H1 (cell line): ENCODE measurements at regions of chr10 and their contacts with region 1.

Region 1: DNA sequence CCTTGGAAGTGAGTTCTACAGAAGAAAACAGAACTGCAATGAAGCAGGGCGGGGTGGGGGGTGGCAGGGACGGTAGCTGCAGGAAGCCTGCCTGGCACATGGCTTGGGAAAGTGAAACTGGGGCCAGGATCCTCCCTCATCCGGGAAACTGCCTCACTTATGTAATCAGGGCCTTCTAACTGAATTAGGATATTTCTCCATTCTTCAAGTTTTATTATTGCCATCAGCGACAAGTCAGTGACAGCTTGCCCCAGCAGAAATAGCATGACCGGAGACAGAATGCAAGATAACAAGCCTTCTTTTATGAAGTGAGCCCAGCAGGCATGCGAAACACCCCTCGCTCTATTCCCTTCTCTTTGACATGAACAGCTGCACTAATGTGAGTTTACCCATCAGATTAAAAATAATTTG is 77.5 kb upstream of the CACUL1 start:
- DNase-seq: no peak
- H3K4me3 ChIP-seq: no peak overlapping the region
- H3K27ac ChIP-seq: no peak overlapping the region
- H3K4me1 ChIP-seq: no peaks in the 10 kb centered on the region
- H3K27me3 ChIP-seq: no peaks in the 10 kb centered on the region
- CTCF ChIP-seq: no peak
- EP300 ChIP-seq: no peak
- POLR2A ChIP-seq: no peak
- RAD21 ChIP-seq: no peak

Region 2: DNA sequence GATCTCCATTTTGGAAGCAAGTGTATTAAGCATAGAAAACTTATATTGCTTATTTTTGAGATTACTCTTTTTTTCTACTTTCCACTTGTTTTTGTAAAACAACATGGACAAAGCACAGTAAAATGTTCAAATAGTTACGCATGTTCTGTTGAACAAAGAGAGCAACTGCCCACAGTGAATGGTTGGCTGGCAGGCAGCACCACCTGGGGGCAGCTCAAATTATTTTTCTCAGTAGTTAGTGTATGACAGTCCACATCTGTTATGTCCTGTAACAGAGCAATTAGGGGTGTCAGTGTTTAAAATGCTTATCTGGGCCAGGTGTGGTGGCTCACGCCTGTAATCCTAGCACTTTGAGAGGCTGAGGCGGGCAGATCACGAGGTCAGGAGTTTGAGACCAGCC is 31.3 kb before region 1 on chr10:
- CTCF ChIA-PET with region 1: interaction called, 19 read pairs
- POLR2A ChIA-PET with region 1: no interaction called
- DNase-seq: no peak
- H3K4me3 ChIP-seq: no peak overlapping the region
- H3K27ac ChIP-seq: no peak overlapping the region
- H3K4me1 ChIP-seq: no peaks in the 10 kb centered on the region
- H3K27me3 ChIP-seq: no peaks in the 10 kb centered on the region
- CTCF ChIP-seq: peak; percentile 20 to 34 (median 22); a peak in 3 of 4 replicates
- EP300 ChIP-seq: no peak
- POLR2A ChIP-seq: no peak
- RAD21 ChIP-seq: peak; percentile 50 to 63

Region 3: DNA sequence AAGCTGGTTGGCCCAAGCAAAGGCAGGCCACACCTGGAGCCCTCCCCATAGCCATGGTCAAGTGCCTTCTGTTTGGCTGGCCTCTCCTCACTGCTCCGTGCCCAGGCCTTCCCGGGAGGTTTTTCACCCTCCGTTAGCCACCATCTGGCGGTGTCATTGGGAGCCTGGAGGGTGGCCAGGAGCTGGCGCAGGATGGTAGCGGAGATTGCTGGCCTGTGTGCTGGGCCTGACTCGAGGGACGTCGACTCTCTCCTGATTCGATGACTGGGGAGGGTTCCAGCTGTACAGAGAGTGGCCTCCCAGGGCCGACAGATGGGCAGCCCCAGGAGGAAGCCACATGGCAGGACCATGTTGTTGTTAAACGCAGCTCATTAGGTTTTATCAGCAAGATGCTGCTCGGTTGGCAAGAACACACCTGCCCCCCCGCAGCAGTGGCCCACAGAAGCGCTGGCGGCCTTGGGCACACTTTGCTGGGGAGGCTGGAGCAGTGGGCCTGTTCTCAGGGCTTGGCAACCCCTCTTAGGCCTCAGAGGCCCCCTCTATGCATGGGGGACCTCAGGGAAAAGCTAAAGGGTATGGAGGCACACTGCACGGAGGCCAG is 13.5 kb before region 1 on chr10:
- CTCF ChIA-PET with region 1: interaction called, 21 read pairs
- POLR2A ChIA-PET with region 1: no interaction called
- DNase-seq: no peak
- H3K4me3 ChIP-seq: no peak overlapping the region
- H3K27ac ChIP-seq: no peak overlapping the region
- H3K4me1 ChIP-seq: no peaks in the 10 kb centered on the region
- H3K27me3 ChIP-seq: no peaks in the 10 kb centered on the region
- CTCF ChIP-seq: no peak
- EP300 ChIP-seq: no peak
- POLR2A ChIP-seq: no peak
- RAD21 ChIP-seq: no peak

Region 4: DNA sequence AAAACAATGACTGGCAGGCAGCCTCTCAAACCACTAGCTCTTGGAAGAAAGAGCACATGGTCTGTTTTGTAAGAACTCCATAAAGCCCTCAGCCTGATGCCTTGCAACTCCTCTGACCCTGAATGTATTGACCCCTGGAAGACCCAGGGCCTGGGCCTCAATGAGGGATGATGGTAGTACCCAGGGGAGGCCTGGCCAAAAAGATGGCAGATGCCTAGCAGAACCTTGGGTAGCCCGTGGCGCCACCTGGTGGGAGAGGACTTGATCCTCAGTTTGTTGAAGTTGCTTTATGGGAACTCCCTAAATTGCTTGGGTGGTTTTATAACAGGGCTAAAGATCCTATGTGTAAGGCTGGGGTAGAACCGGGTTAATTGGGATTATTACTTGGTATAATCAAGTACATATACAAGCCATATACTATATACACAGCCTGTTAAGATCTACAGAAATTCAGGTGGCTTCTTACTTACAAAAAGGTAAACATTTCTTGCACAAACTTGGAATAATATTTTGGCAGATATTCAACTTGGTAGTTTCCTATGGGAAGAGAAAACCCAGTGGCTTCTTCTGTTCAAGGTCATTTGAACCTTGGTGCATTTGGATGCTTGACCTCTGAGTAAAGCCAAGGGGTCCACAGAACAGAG is 18.3 kb after region 1 on chr10:
- CTCF ChIA-PET with region 1: interaction called, 10 read pairs
- POLR2A ChIA-PET with region 1: no interaction called
- DNase-seq: peak; percentile 46 to 92
- H3K4me3 ChIP-seq: no peak overlapping the region
- H3K27ac ChIP-seq: no peak overlapping the region
- H3K4me1 ChIP-seq: no peaks in the 10 kb centered on the region
- H3K27me3 ChIP-seq: no peaks in the 10 kb centered on the region
- CTCF ChIP-seq: peak; percentile 78 to 87 (median 79)
- EP300 ChIP-seq: no peak
- POLR2A ChIP-seq: no peak
- RAD21 ChIP-seq: peak; percentile 76 to 85

Region 5: DNA sequence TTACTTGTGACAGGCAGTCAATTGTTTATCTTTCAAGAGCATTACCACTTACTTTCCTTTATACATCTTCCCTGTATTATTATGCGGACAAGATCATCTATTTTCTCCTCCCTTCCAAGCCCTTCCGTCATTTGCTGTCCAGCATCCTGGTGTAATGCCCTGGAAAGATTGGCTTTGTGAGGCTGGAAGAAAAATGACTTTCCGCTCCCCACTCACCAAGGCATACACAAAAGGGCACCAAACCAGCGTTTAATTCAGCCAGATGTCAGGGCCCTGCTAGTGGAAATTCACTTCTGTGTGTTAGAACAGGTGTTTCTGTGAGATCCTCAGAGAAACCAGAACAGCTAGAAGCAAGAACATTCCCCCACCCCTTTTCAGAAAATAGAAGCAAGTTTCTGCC is 69.1 kb after region 1 on chr10:
- CTCF ChIA-PET with region 1: no interaction called
- POLR2A ChIA-PET with region 1: no interaction called
- DNase-seq: no peak
- H3K4me3 ChIP-seq: no peak overlapping the region
- H3K27ac ChIP-seq: no peak overlapping the region
- H3K4me1 ChIP-seq: no peaks in the 10 kb centered on the region
- H3K27me3 ChIP-seq: no peaks in the 10 kb centered on the region
- CTCF ChIP-seq: no peak
- EP300 ChIP-seq: no peak
- POLR2A ChIP-seq: no peak
- RAD21 ChIP-seq: no peak